AG04449 (cell line): ENCODE measurements at regions of chrX and their contacts with region 1.

Region 1: DNA sequence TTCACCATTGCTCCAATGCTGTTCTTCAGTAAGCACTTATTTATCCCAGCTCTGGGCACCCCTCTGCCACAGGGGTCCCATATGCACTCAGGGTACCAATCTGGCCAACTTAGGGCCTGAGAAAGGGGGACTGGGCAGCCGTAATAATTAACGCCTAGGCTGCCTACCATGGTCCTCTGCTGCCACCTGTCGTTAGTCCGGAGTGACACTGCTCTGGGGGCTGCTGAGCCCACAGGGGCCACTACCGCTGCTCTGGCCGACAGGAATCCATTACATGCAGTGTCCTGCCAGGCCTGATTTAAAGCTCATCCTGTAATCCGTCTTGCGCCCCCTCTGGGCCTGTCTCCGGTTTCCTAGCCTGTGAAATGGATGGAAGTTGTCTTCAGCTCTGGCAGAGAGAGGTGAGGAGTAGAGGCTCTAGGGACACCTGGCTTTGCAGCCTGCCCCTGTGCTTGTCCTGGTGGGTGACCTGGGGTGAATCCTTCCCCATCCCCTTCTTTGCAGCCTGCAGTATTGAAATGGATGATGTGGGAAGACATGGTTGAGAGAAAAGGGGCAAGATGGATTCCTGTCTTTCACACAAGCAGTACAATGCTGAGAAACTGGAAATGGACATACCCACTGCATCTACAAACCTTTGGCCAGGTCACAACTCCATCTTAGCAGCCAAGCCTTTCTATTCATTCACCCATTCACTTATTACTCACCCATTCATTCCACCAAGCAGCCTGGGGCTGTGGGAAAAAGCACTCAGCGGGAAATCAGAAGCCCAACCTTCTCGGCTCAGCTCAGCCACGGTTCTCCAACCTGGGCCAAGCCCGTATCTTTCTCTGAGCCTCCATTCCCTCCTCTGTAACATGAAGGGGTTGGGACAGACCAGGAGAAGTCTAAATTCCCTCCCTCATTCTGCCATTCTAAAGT is 116.3 kb upstream of the NALF2 start:
- DNase-seq: no peak
- H3K4me3 ChIP-seq: no peak overlapping the region
- CTCF ChIP-seq: peak; percentile 62

Region 2: GRCh38 chrX:68822641-68823410 is 565.0 kb before region 1 on chrX:
- CTCF ChIA-PET with region 1: interaction called, 64 read pairs
- POLR2A ChIA-PET with region 1: no interaction called
- DNase-seq: no peak
- H3K4me3 ChIP-seq: no peak overlapping the region
- CTCF ChIP-seq: peak; percentile 56

Region 3: GRCh38 chrX:69222103-69223090 is 165.4 kb before region 1 on chrX:
- CTCF ChIA-PET with region 1: interaction called, 14 read pairs
- POLR2A ChIA-PET with region 1: no interaction called
- DNase-seq: no peak
- H3K4me3 ChIP-seq: no peak overlapping the region
- CTCF ChIP-seq: peak; percentile 79

Region 4: DNA sequence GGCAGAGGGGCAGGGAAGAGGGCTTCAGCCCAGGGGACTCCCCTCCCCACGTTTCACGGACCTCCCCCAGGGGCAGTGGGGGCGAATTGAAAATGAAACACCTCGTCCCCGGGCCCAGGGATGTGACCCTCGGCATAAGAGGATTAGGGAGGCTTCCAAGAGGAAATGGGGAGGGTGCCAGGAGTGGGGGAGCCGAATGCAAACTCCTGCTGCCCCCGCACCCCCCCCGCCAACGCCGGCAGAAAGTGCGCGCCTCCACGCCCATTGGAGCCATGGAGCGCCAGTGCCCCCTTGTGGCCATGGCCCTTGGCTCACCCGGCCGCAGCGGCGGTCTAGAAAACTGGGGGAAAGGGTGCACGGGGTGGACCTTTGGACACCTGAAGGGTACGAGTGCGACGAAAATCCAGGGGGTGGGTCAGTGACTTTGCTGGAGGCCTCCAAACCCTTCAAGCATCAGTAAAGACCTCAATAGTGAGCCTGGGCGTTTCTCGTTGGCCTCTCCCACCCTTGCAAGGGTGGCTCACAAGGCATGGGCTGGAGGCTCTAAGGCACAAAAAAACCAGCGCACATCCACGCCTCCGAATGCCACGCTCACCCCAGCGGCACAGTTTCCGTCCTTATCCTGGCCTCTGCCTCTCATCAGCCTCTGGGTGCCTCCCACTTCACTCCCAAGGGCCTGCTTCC is 101.8 kb before region 1 on chrX:
- CTCF ChIA-PET with region 1: interaction called, 18 read pairs
- POLR2A ChIA-PET with region 1: no interaction called
- DNase-seq: no peak
- H3K4me3 ChIP-seq: peak overlapping the region; percentile 52
- CTCF ChIP-seq: peak; percentile 87

Region 5: DNA sequence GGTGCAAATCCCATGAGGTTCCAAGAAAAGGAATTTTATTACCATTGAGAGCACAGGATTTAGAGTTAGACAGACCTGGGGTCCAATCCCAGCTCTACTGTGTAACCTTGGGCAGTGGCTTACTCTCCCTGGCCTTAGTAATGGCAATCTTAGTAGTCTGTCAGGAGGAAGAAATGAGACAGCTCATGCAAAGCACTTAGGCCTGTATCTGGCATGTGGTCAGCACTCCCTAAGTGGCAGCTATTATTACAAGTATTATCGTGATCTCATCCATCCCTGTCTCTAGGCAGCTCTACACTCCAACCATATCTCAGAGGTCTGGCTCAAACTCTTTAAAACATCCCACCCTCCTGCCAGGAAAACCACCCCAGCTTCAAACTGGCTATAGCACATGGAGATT is 13.3 kb before region 1 on chrX:
- CTCF ChIA-PET with region 1: interaction called, 18 read pairs
- POLR2A ChIA-PET with region 1: no interaction called
- DNase-seq: no peak
- H3K4me3 ChIP-seq: no peak overlapping the region
- CTCF ChIP-seq: no peak